ENCODE measurements at regions of chr18 and their contacts with region 1.

Region 1: GRCh38 chr18:48951448-48952286 is 902 bp upstream of the SMAD7 start:
- DNase-seq: peak; percentile 77
- ATAC-seq: peak; percentile 46
- H3K4me3 Mint-ChIP-seq: peak overlapping the region; percentile 95
- H3K27ac Mint-ChIP-seq: peak overlapping the region; percentile 98
- H3K4me1 Mint-ChIP-seq: peaks cover 32% of the 10 kb centered on the region
- H3K27me3 Mint-ChIP-seq: no peaks in the 10 kb centered on the region
- CTCF ChIP-seq: no peak

Region 2: GRCh38 chr18:48216624-48217257 is 734.9 kb before region 1 on chr18:
- CTCF ChIA-PET with region 1: no interaction called
- POLR2A ChIA-PET with region 1: no interaction called
- intact Hi-C with region 1: no loop called
- DNase-seq: no peak
- ATAC-seq: no peak
- H3K4me3 Mint-ChIP-seq: no peak overlapping the region
- H3K27ac Mint-ChIP-seq: no peak overlapping the region
- H3K4me1 Mint-ChIP-seq: no peaks in the 10 kb centered on the region
- H3K27me3 Mint-ChIP-seq: peaks cover 3% of the 10 kb centered on the region
- CTCF ChIP-seq: no peak

Region 3: DNA sequence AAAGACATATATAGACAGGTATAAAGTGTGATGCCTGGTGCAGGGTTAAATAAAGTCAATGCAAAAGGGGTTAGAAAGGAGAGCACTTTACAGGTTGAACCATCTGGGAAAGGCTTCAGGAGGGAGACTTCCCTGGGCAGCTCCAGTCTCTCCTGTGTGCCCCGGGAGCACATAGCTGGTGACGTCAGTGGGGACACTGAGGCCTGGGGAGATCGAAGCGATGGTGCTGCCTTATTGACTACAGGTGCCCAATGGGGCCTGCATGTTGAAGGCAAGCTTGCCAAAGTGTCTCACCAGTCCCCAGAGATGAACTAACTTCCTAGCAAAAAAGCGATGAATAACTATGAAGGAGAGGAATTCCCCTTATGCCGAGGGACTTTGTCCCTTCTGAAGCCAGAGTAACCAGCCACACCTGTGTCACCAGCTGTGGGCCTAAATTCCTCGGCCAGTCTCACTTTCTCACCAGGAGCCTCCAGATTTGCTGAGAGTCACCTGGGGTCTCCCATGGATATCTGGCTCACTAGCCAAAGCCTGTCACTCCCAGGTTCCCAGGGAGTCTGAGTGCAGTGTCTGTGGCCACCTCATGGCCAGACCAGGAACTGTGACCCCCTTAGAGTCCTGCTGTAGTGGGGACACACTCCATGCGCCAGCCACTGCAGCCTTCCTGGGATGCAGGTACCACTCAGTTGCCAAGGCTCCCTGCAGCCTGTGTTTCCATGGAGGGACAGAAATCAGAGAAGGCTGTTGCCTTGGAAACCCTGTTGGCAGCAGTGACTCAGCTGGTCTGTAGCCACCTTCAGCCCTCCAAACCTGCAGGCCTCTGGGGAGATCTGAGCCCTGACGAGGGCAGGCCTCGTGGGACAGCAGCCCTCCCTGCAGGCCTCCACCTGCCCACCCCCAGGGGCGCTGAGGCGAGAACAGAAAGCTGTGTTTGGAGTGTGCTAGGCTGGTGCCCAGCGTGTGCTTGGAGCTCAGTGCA is 284.1 kb before region 1 on chr18:
- CTCF ChIA-PET with region 1: no interaction called
- POLR2A ChIA-PET with region 1: no interaction called
- intact Hi-C with region 1: loop called (anchors 2 kb)
- DNase-seq: peak; percentile 64
- ATAC-seq: peak; percentile 95
- H3K4me3 Mint-ChIP-seq: no peak overlapping the region
- H3K27ac Mint-ChIP-seq: peak overlapping the region; percentile 48
- H3K4me1 Mint-ChIP-seq: peaks cover 22% of the 10 kb centered on the region
- H3K27me3 Mint-ChIP-seq: no peaks in the 10 kb centered on the region
- CTCF ChIP-seq: no peak

Region 4: DNA sequence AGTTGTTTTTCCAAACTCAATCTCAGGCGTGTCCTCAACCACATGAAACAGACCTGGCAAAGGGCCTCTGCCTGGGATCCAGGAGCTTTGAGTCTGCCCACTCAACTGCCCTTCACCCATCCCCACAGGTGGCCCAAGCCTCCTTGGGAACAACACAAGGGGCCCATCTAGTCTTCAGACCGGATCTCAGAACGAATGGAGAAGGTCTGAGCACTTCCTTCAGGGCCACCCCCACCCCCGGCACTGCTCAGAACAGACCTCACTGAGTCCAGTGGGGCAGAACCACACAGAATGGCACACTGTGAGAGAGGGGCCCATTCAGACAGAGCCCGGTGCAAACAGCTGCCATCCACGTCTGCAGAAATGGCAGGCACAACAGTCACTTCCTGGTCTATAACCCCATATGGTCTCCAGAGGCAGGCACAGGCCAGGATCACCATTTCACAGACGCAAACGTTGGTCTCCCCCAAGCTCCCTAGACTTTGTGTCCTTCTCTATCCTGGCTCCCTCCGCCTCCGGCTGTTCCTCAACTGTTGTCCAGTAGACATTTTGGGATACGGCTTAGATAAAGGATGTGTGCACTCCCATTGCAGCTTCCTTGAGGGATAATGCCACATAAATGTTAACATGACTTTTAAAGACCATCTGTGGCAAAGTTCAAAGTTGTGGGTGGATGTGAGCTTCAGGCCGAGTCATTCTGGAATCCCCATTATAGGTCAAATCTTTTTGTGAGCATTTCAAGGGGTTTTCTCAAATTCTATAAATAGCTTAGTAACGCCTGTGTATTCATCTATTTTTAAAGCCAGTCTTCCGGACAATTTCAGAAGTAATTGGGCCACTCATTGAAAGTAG is 150.6 kb before region 1 on chr18:
- CTCF ChIA-PET with region 1: no interaction called
- POLR2A ChIA-PET with region 1: interaction called, 7 read pairs
- intact Hi-C with region 1: loop called (anchors 1 kb)
- DNase-seq: peak; percentile 20
- ATAC-seq: peak; percentile 85
- H3K4me3 Mint-ChIP-seq: peak overlapping the region; percentile 67
- H3K27ac Mint-ChIP-seq: peak overlapping the region; percentile 82
- H3K4me1 Mint-ChIP-seq: peaks cover 44% of the 10 kb centered on the region
- H3K27me3 Mint-ChIP-seq: no peaks in the 10 kb centered on the region
- CTCF ChIP-seq: no peak

Region 5: DNA sequence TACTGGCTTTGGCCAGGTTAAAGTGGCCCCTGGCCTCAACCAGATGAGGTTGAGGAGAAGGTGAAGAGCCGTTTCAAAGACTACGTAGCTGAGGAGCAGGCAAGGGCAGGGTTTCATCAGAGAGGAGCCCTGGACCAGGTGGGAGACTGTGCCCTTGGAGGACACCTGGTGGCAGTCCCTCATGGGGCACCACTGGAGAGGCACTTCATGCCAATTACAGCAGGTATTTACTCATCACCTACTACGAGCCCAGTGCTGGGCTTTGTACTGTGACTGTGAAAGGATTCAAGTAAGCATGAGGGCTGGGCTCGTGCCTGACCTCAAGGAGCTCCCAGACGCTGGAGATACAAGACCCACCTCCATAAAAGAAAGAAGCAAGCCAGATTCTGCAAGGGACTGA is 38.5 kb before region 1 on chr18:
- CTCF ChIA-PET with region 1: interaction called, 8 read pairs
- POLR2A ChIA-PET with region 1: interaction called, 4 read pairs
- intact Hi-C with region 1: loop called (anchors 5 kb)
- DNase-seq: no peak
- ATAC-seq: peak; percentile 79
- H3K4me3 Mint-ChIP-seq: no peak overlapping the region
- H3K27ac Mint-ChIP-seq: no peak overlapping the region
- H3K4me1 Mint-ChIP-seq: peaks cover 10% of the 10 kb centered on the region
- H3K27me3 Mint-ChIP-seq: no peaks in the 10 kb centered on the region
- CTCF ChIP-seq: no peak

Region 6: DNA sequence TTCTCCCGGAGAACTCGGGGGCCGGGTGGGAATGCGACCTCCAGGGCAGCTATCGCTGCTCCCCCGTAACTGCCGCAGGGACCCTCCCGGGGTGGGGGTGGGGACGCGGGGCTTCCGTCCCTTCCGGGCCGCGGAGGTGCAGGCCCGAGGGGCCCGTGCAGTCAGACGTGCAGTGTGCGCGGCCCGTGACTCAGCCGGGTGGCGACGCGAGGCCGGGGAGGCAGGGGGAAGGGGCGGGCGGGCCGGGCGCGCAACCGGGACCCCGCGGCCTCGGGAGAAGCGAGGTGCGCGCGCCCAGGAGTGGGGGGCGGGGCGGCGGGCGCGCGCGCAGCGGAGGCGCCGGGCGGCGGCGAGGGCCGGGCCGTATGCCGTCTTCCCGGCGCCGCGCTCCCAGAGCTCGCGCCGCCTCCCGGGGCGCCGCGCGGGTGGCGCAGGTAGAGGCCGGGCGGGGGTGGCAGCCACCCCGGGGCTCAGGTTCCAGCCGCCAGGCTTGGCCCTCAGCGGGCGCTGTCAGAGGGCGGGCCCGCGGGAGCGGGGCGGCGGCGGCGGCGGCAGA is 24.1 kb after region 1 on chr18:
- CTCF ChIA-PET with region 1: no interaction called
- POLR2A ChIA-PET with region 1: interaction called, 6 read pairs
- intact Hi-C with region 1: loop called (anchors 1 kb)
- DNase-seq: peak; percentile 44
- ATAC-seq: peak; percentile 78
- H3K4me3 Mint-ChIP-seq: peak overlapping the region; percentile 38
- H3K27ac Mint-ChIP-seq: no peak overlapping the region
- H3K4me1 Mint-ChIP-seq: peaks cover 14% of the 10 kb centered on the region
- H3K27me3 Mint-ChIP-seq: peaks cover 16% of the 10 kb centered on the region
- CTCF ChIP-seq: no peak

Region 7: DNA sequence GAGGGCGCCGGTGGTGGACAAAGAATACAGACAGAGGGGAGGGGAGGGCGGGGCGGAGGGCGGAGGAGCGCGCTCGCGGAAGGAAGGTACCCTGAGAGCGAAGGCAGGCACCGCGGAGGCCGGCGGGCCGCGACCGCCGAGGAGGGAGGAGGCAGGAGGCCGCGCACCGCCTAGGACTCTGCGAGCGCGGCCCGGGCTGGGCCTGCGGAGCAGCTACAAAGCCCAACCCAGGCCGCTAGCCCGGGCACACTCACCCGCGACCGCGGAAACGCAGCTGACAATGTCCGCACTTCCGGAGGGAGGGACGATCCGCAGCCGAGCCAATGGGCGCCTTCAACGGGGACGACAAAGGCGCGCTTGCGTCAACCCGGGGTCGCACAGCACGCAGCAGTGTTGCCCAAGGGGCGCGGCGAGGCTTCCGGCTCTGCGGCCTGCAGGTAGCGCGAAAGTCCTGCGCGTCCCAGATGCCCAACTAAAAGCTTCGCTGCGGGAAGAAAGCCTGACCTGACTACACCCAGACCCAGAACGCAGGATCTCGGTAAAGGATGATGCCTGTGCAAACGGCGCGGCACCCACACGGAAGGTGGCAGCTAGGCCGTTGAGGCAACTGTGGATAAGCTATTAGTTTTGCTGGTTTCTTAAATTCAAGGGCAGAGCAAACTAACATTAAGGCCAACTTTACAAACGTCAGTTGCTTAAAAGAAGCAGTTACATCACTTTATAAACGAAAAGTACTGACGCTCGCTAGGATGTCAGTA is 535.5 kb after region 1 on chr18 and contains the start of gene C18orf32:
- CTCF ChIA-PET with region 1: no interaction called
- POLR2A ChIA-PET with region 1: interaction called, 5 read pairs
- intact Hi-C with region 1: loop called (anchors 2 kb)
- DNase-seq: peak; percentile 94
- ATAC-seq: peak; percentile 92
- H3K4me3 Mint-ChIP-seq: peak within 1 kb of the TSS; percentile 94
- H3K27ac Mint-ChIP-seq: peak within 1 kb of the TSS; percentile 98
- H3K4me1 Mint-ChIP-seq: peaks cover 68% of the 10 kb centered on the region
- H3K27me3 Mint-ChIP-seq: no peaks in the 10 kb centered on the region
- CTCF ChIP-seq: no peak
- total RNA-seq, gene C18orf32: 31.6 and 32.9 TPM in 2 replicates

Region 8: DNA sequence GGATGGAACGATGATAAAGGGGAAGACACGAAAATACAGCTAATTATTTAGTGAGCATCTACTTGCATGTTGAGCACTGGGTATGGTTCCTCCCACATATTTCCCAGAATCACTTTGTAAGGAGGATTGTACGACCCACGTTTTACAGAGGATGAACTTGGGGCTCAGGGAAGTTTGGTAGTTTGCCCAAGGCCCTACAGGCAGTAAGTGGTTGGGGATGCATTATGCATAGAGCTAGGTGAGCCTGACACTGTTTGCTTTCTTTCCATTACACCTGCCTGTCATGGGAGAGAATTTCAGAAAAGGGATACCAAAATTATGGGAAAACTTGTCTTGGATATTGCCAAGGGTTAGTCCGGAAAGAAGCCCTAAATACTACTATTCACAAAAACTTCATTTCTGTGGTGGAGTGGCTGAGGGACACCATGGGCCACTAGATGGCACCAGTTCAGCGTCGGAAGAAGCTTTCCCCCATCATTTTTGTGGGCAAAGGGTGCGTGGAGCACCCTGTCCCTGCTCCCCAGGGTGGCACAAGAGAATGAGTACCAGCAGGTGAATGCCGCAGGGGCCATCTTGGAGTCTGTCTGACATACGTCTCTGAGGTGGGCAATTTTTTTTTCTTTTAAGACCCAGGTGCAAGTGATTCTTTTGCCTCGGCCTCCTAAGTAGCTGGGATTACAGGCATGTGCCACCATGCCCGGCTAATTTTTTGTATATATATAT is 558.9 kb after region 1 on chr18:
- CTCF ChIA-PET with region 1: no interaction called
- POLR2A ChIA-PET with region 1: no interaction called
- intact Hi-C with region 1: no loop called
- DNase-seq: peak; percentile 32
- ATAC-seq: peak; percentile 67
- H3K4me3 Mint-ChIP-seq: no peak overlapping the region
- H3K27ac Mint-ChIP-seq: no peak overlapping the region
- H3K4me1 Mint-ChIP-seq: no peaks in the 10 kb centered on the region
- H3K27me3 Mint-ChIP-seq: peaks cover 18% of the 10 kb centered on the region
- CTCF ChIP-seq: no peak

Measured in activated B cell treated with CpG ODN at 0.5 μM for 24 hours (primary cell).